ENCODE measurements at regions of chr18 and their contacts with region 1.

Region 1: GRCh38 chr18:25896178-25896780 is 194.1 kb downstream of the SS18 start:
- DNase-seq: no peak
- ATAC-seq: peak; percentile 40
- H3K4me3 Mint-ChIP-seq: no peak overlapping the region
- H3K27ac Mint-ChIP-seq: no peak overlapping the region
- H3K4me1 Mint-ChIP-seq: no peaks in the 10 kb centered on the region
- H3K27me3 Mint-ChIP-seq: peaks cover 10% of the 10 kb centered on the region
- CTCF ChIP-seq: peak; percentile 64

Region 2: DNA sequence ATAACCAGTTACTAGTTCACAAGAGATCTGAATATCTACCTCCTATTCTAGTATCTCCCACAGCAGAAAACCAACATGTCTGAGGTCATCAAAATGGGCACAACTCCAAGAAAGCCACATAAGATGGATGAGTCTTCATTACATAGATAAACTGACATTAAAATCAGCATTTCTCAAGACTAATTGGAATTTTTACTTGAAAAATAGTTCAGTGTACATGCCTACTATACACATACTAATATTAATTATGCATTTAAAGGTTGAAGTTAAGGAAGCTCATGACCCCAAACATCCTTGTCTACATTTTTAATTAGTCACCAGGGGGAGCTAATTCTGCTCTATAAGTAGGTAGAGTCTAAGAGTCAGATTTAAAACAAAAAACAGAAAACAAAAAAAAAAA is 586.2 kb before region 1 on chr18:
- CTCF ChIA-PET with region 1: no interaction called
- POLR2A ChIA-PET with region 1: no interaction called
- intact Hi-C with region 1: loop called (anchors 1 kb)
- DNase-seq: no peak
- ATAC-seq: no peak
- H3K4me3 Mint-ChIP-seq: no peak overlapping the region
- H3K27ac Mint-ChIP-seq: no peak overlapping the region
- H3K4me1 Mint-ChIP-seq: no peaks in the 10 kb centered on the region
- H3K27me3 Mint-ChIP-seq: no peaks in the 10 kb centered on the region
- CTCF ChIP-seq: no peak

Measured in activated B cell treated with CpG ODN at 0.5 μM for 24 hours (primary cell).